Heart left ventricle (tissue), 16 donors: ENCODE measurements at regions of chr19 and their contacts with region 1.

Region 1: GRCh38 chr19:16628183-16628983 is at the start of gene MED26:
- DNase-seq: peak; percentile 96 to 98 (median 96)
- ATAC-seq: peak; percentile 93 to 98 (median 95)
- H3K4me3 ChIP-seq: peak within 1 kb of the TSS; percentile 75 to 99 (median 90)
- H3K27ac ChIP-seq: peak within 1 kb of the TSS; percentile 92 to 99 (median 98)
- H3K4me1 ChIP-seq: peaks cover 4 to 59% (median 38%) of the 10 kb centered on the region in 12 donors
- H3K27me3 ChIP-seq: no peaks in the 10 kb centered on the region
- CTCF ChIP-seq: peak in 5 of 12 donors; percentile 6 to 36 (median 26)
- POLR2A ChIP-seq: peak; percentile 18 to 83
- total RNA-seq, gene MED26: 3.6 to 7.5 (median 4.6) TPM

Region 2: DNA sequence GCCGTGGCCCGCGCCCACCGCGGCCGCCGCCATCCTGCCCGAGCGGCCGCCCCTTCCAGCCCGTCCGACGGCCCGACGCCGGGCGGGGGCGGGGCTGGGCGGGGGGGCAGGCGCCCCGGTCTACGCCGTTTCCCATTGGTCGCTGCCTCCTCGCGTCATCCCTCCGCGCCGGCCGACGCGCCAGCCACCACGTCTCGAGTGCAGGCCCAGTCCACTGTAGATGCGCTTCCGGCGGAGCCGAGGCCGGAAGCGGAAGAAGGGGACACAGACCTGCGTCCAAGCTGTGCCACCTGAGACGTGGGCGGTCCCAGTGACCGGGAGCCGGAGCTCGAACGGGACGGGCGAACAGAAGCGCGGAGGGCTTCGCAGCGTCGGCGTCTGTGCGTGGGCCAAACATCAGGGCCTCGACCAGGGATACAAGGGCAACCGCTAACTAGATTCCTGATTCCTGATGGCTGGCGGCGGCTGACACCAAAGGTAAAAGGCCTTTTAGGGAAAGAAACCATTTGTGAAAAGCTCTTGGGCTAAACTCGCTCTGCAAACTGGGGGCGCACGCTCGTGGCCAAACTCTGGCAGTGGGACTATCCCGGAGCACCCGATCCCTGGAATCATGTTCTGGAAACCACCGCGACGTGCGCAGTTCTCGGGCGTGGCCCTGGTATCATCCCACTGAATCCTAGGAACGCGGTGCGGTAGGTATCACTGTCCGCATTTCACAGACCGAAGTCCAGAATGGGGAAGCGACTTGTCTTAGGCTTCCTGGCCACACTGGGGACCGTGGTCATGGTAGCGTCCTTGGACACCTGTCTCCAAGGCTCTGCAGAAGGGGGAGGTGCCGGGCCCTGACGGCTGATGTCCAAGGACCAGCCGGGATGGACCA is 55.8 kb before region 1 on chr19 and contains the start of gene SLC35E1:
- intact Hi-C with region 1: loop called in 8 of 10 experiments (anchors 2 to 5 kb)
- DNase-seq: peak; percentile 94 to 98 (median 97)
- ATAC-seq: peak; percentile 96 to 99 (median 98)
- H3K4me3 ChIP-seq: peak within 1 kb of the TSS; percentile 69 to 98 (median 85)
- H3K27ac ChIP-seq: peak within 1 kb of the TSS; percentile 35 to 93 (median 86)
- H3K4me1 ChIP-seq: peaks cover 7 to 54% (median 27%) of the 10 kb centered on the region in 12 donors
- H3K27me3 ChIP-seq: no peaks in the 10 kb centered on the region
- CTCF ChIP-seq: no peak
- POLR2A ChIP-seq: peak in 1 of 2 donors; percentile 70
- total RNA-seq, gene SLC35E1: 20.4 to 44.0 (median 24.0) TPM

Region 3: DNA sequence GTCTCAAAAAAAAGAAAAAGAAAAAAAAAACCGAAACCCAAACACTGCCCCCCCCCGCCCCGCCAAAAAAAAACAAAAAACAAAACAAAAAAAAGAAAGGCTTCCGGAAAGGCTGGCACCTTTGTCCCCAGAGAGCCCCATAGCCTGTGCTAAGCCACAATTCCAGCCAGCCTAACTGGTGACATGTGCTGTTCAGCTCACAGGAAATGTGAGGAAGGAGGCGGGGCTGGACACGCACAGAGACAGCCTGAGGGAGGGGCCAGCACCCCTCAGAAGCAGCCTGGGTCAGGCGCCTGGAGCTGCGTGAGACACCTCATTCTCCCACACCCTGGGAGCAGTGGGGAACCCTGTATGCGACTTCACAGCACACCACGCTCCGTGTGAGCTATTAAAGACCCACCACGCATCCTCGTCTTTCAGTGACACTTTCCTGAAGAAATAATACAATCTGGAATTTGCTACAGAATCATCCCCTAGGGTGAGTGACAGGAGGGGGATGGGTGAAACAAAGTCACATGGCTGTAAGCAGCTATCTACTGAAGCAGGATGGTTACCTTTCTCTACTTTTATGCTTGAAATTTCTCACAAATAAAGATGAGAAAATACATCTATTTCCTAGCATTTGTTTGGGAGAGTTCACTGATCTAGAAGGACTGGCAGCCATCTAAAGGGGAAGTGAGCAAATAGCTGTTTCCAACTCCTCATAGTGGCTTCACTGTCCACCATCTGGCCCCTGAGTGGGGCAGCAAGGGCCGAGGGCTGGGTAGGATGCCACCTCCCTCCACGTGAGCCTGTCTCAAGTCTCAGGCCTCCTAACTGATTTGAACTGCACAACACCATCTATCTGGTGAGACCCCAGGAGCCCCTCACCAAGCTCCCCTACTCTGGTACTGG is 43.9 kb before region 1 on chr19:
- intact Hi-C with region 1: loop called in 5 of 10 experiments (anchors 5 kb)
- DNase-seq: peak; percentile 84 to 89 (median 88)
- ATAC-seq: peak; percentile 62 to 86 (median 70)
- H3K4me3 ChIP-seq: peak overlapping the region in 8 of 12 donors; percentile 7 to 56 (median 16)
- H3K27ac ChIP-seq: peak overlapping the region in 11 of 12 donors; percentile 7 to 87 (median 55)
- H3K4me1 ChIP-seq: peaks cover 21 to 99% (median 87%) of the 10 kb centered on the region in 12 donors
- H3K27me3 ChIP-seq: no peaks in the 10 kb centered on the region
- CTCF ChIP-seq: no peak
- POLR2A ChIP-seq: no peak

Region 4: GRCh38 chr19:16645140-16645539 is 16.8 kb after region 1 on chr19:
- intact Hi-C with region 1: no loop called
- DNase-seq: no peak
- ATAC-seq: no peak
- H3K4me3 ChIP-seq: no peak overlapping the region
- H3K27ac ChIP-seq: no peak overlapping the region
- H3K4me1 ChIP-seq: peaks cover 0 to 8% (median 0%) of the 10 kb centered on the region in 12 donors
- H3K27me3 ChIP-seq: no peaks in the 10 kb centered on the region
- CTCF ChIP-seq: no peak
- POLR2A ChIP-seq: no peak

Region 5: GRCh38 chr19:16749326-16749725 is 120.9 kb after region 1 on chr19:
- intact Hi-C with region 1: no loop called
- DNase-seq: no peak
- ATAC-seq: no peak
- H3K4me3 ChIP-seq: no peak overlapping the region
- H3K27ac ChIP-seq: no peak overlapping the region
- H3K4me1 ChIP-seq: no peaks in the 10 kb centered on the region
- H3K27me3 ChIP-seq: peaks cover 0 to 19% (median 0%) of the 10 kb centered on the region in 9 donors
- CTCF ChIP-seq: no peak
- POLR2A ChIP-seq: no peak